Common myeloid progenitor, CD34-positive (primary cell): ENCODE measurements at regions of chr17 and their contacts with region 1.

Region 1: DNA sequence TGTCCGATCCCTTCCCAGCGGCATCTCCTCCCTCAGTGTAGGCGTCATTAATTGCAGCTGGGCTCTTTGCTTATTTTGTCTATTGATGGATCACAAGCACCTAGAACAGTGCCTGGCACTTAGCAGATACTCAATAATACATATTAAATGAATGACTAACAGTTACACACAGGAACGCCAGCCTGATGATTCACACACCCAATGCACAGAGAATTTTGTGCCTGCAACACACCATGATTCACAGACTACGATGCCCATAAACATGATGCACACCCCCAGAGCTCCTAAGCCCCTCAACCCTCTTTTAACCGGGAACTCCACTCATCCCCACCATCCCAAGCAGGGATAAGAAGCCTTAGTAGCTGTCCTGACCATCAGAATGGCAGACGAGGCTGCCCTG is 66.6 kb upstream of the TMEM97 start:
- DNase-seq: no peak
- H3K4me3 ChIP-seq: no peak overlapping the region
- H3K27ac ChIP-seq: no peak overlapping the region
- H3K4me1 ChIP-seq: peaks cover 0 to 14% (median 10%) of the 10 kb centered on the region in 4 experiments
- H3K27me3 ChIP-seq: peaks cover 0 to 27% (median 8%) of the 10 kb centered on the region in 5 experiments

Region 2: GRCh38 chr17:27805520-27806146 is 446.8 kb before region 1 on chr17:
- CTCF ChIA-PET with region 1: interaction called, 18 read pairs
- POLR2A ChIA-PET with region 1: no interaction called
- DNase-seq: peak; percentile 85 to 91 (median 88)
- H3K4me3 ChIP-seq: peak overlapping the region; percentile 24 to 82 (median 67)
- H3K27ac ChIP-seq: peak overlapping the region in 1 of 2 experiments; percentile 54
- H3K4me1 ChIP-seq: peaks cover 0 to 21% (median 14%) of the 10 kb centered on the region in 4 experiments
- H3K27me3 ChIP-seq: no peaks in the 10 kb centered on the region

Region 3: DNA sequence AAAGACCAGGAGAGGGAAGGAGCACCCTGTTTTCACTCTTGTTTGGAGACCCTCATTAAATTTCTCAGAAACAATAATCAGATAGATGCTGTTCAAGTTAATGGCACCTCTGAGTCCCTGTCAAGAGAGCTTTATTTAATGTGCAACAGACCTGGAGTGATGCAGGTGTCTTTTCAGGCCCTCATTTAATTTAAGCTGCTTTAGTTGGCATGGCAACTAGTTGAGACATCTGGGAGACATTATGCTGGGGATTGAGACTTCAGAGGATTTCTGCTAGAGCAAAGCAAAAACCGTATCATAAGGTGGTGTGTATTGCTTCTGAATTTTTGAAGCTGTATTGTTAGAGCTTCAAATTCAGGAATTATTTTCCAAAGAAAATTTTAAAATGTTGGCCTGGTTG is 101.4 kb before region 1 on chr17:
- CTCF ChIA-PET with region 1: no interaction called
- POLR2A ChIA-PET with region 1: no interaction called
- DNase-seq: no peak
- H3K4me3 ChIP-seq: no peak overlapping the region
- H3K27ac ChIP-seq: no peak overlapping the region
- H3K4me1 ChIP-seq: no peaks in the 10 kb centered on the region
- H3K27me3 ChIP-seq: no peaks in the 10 kb centered on the region

Region 4: GRCh38 chr17:28240991-28241340 is 11.5 kb before region 1 on chr17:
- CTCF ChIA-PET with region 1: interaction called, 23 read pairs
- POLR2A ChIA-PET with region 1: no interaction called
- DNase-seq: no peak
- H3K4me3 ChIP-seq: no peak overlapping the region
- H3K27ac ChIP-seq: no peak overlapping the region
- H3K4me1 ChIP-seq: no peaks in the 10 kb centered on the region
- H3K27me3 ChIP-seq: peaks cover 0 to 3% (median 0%) of the 10 kb centered on the region in 5 experiments